Activated CD4-positive, alpha-beta memory T cell treated with anti-CD3 and anti-CD28 coated beads, Interleukin-2, amount 10 ng/mL, durations not matched to agents 7 days and 5 days (primary cell): ENCODE measurements at regions of chr20 and their contacts with region 1.

Region 1: GRCh38 chr20:56411759-56412472 is at the start of gene CASS4:
- DNase-seq: peak; percentile 54
- H3K4me3 Mint-ChIP-seq: peak within 1 kb of the TSS; percentile 79
- H3K27ac Mint-ChIP-seq: peak within 1 kb of the TSS; percentile 90
- H3K4me1 Mint-ChIP-seq: peaks cover 60% of the 10 kb centered on the region
- H3K27me3 Mint-ChIP-seq: no peaks in the 10 kb centered on the region
- total RNA-seq, gene CASS4: 13.2 TPM

Region 2: DNA sequence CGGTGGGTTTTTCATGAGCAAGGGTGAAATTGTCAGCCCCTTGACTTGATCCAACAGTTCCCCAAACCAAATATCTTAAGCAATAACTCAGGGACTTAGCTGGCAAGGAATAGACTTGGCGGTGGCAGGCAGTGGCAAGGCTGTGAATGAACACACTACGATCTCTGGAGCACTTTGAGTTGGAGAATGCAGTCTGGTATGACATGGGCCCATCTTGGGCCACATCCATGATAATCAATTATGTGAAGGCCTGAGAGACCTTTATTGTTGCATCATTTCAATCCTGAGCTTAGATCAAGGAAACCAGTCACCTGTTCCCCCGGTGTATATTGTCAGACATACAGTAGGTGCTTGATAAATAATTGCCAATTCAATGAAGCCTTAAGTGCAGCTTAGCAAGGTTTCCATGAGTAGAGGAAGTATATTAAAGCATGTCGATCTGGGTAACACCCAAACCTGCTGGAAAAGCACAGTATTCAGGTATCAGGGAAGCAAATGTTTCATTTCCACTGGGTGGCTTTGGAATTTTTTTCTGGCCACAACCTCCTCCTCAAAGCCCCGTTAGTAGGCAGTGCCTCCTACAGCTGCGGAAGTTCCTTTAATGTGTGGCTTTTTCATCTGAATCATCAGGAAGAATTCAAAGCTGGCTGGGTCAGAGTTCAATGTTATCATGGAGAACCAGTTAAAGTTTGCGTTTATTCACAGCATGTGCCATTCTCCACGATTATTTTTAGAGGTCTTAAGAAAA is 10.3 kb after region 1 on chr20:
- CTCF ChIA-PET with region 1: interaction called, 6 read pairs
- POLR2A ChIA-PET with region 1: interaction called, 28 read pairs
- DNase-seq: no peak
- H3K4me3 Mint-ChIP-seq: peak overlapping the region; percentile 8
- H3K27ac Mint-ChIP-seq: peak overlapping the region; percentile 52
- H3K4me1 Mint-ChIP-seq: peaks cover 68% of the 10 kb centered on the region
- H3K27me3 Mint-ChIP-seq: no peaks in the 10 kb centered on the region

Region 3: GRCh38 chr20:56429502-56429901 is 17.6 kb after region 1 on chr20:
- CTCF ChIA-PET with region 1: no interaction called
- POLR2A ChIA-PET with region 1: interaction called, 16 read pairs
- DNase-seq: peak; percentile 18
- H3K4me3 Mint-ChIP-seq: peak overlapping the region; percentile 67
- H3K27ac Mint-ChIP-seq: peak overlapping the region; percentile 79
- H3K4me1 Mint-ChIP-seq: peaks cover 62% of the 10 kb centered on the region
- H3K27me3 Mint-ChIP-seq: no peaks in the 10 kb centered on the region

Region 4: GRCh38 chr20:56463428-56463827 is 51.5 kb after region 1 on chr20:
- CTCF ChIA-PET with region 1: interaction called, 4 read pairs
- POLR2A ChIA-PET with region 1: interaction called, 19 read pairs
- DNase-seq: peak; percentile 74
- H3K4me3 Mint-ChIP-seq: peak overlapping the region; percentile 32
- H3K27ac Mint-ChIP-seq: peak overlapping the region; percentile 80
- H3K4me1 Mint-ChIP-seq: peaks cover 76% of the 10 kb centered on the region
- H3K27me3 Mint-ChIP-seq: no peaks in the 10 kb centered on the region

Region 5: GRCh38 chr20:56468316-56469082 is 56.6 kb after region 1 on chr20 and contains the start of gene RTF2:
- CTCF ChIA-PET with region 1: interaction called, 4 read pairs
- POLR2A ChIA-PET with region 1: interaction called, 19 read pairs
- DNase-seq: peak; percentile 98
- H3K4me3 Mint-ChIP-seq: peak within 1 kb of the TSS; percentile 100
- H3K27ac Mint-ChIP-seq: peak within 1 kb of the TSS; percentile 98
- H3K4me1 Mint-ChIP-seq: peaks cover 65% of the 10 kb centered on the region
- H3K27me3 Mint-ChIP-seq: no peaks in the 10 kb centered on the region
- total RNA-seq, gene RTF2: 121 TPM

Region 6: DNA sequence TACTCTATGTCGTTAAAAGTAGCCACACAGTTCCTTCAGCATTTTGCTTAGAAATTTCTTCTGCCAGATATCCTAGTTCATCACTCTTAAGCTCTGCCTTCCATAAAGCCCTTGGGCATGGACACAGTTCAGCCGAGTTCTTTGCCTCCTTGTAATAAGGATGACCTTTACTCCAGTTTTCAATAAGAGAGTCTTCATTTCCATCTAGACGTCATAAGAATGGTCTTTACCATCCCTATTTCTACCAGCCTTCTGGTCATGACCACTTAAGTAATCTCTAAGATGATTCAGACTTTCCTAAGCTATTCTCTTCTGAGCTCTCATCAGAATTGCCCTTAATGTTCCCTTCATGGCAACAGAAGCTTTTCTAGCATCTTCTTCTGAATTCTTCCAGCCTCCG is 343.3 kb after region 1 on chr20:
- CTCF ChIA-PET with region 1: no interaction called
- POLR2A ChIA-PET with region 1: no interaction called
- DNase-seq: no peak
- H3K4me3 Mint-ChIP-seq: no peak overlapping the region
- H3K27ac Mint-ChIP-seq: no peak overlapping the region
- H3K4me1 Mint-ChIP-seq: no peaks in the 10 kb centered on the region
- H3K27me3 Mint-ChIP-seq: peaks cover 3% of the 10 kb centered on the region